Ascending aorta (tissue), 2 donors: ENCODE measurements at regions of chr3 and their contacts with region 1.

Region 1: DNA sequence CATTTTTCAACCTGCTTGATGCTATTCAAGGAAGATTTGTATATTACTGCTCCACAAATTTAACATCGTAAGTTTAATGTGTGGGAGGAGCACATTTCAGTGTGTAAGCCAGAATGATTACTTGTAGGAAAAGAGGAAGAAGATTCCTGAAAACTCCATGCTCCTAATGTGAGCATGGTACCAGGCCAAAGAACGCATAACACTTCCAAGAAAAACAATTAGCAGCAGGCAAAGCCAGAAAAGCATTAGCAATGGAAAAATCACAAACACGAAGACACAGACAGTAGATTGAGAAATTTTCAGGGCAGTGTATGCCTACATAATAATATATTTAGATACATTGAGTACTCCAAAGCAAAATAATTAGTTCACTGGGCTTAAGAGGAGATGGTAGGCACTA is 96.6 kb upstream of the CBLB start:
- DNase-seq: no peak
- H3K4me3 ChIP-seq: no peak overlapping the region
- H3K27ac ChIP-seq: peak overlapping the region in 1 of 2 donors; percentile 68
- H3K4me1 ChIP-seq: peaks cover 0 to 19% of the 10 kb centered on the region in 2 donors
- H3K27me3 ChIP-seq: no peaks in the 10 kb centered on the region
- CTCF ChIP-seq: no peak

Region 2: DNA sequence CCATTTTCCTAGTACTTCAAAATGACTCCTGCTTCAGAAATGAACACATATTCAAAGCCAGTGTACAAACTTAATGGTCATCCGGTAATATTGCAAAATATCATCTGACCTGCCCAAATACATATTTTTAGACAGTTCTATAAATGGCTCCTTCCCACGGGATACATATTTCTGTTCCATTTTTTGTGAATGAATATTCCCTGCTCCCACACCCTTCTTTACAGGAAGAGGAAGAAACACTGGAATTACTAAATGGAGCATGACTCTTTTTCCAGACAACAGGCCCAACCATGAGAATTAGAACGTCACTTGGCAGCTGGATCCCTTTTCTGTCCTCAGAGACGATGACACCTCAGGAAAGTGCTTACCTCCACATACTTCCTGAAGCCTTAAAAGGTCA is 58.5 kb before region 1 on chr3:
- intact Hi-C with region 1: loop called (anchors 5 kb)
- DNase-seq: peak; percentile 29 to 90
- H3K4me3 ChIP-seq: no peak overlapping the region
- H3K27ac ChIP-seq: peak overlapping the region; percentile 86 to 91
- H3K4me1 ChIP-seq: peaks cover 11 to 30% of the 10 kb centered on the region in 2 donors
- H3K27me3 ChIP-seq: no peaks in the 10 kb centered on the region
- CTCF ChIP-seq: no peak

Region 3: DNA sequence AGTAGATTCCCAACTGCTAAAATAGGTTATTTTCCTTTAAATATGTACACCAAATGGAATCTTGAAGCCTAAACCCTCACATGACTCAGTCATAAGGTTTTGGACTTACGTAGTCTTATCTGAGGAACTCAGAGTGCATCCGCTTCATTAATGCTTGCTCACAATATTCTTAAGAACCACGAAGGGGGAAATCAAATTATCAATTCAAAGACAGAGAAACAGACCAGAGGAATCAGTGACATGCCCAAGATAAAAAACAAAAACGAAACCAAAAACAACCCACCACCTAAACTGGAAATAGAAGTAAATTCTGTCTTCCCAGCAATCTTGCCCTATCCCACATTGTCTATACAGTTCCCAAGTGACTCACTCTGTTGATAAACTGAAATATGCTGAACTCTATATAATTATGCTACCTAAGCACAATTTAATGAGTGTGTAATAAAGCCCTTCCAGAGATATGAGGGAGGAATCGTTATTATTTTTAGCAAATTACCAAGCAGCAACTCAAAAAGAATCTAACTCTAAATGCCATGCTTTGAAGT is 38.8 kb after region 1 on chr3:
- intact Hi-C with region 1: no loop called
- DNase-seq: no peak
- H3K4me3 ChIP-seq: peak overlapping the region; percentile 45 to 57
- H3K27ac ChIP-seq: peak overlapping the region in 1 of 2 donors; percentile 24
- H3K4me1 ChIP-seq: peaks cover 0 to 5% of the 10 kb centered on the region in 2 donors
- H3K27me3 ChIP-seq: no peaks in the 10 kb centered on the region
- CTCF ChIP-seq: no peak

Region 4: DNA sequence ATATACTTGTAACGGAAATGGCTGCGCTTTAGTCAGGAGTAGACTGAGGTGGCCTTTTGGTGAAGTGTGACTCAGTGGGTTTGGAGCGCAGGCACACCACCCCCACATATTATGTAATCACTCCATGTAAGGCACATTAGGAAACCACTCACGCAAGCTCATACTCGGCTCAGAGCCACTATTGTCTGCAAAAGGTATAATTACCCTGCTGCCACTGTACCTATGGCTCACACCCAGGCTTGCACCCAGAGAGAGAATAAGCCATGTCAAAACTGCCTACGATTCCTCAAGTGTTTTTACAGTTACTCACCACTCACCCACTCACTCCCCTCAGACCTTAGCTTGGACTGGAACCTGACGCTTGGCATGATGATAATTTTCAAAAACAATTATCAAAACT is 800.0 kb after region 1 on chr3:
- intact Hi-C with region 1: no loop called
- DNase-seq: no peak
- H3K4me3 ChIP-seq: no peak overlapping the region
- H3K27ac ChIP-seq: no peak overlapping the region
- H3K4me1 ChIP-seq: no peaks in the 10 kb centered on the region
- H3K27me3 ChIP-seq: no peaks in the 10 kb centered on the region
- CTCF ChIP-seq: no peak